ENCODE measurements at regions of chr19 and their contacts with region 1.

Region 1: GRCh38 chr19:47790398-47790814 is 11.9 kb downstream of the SELENOW start:
- DNase-seq: peak; percentile 90
- H3K4me3 Mint-ChIP-seq: no peak overlapping the region
- H3K27ac Mint-ChIP-seq: no peak overlapping the region
- H3K4me1 Mint-ChIP-seq: peaks cover 5% of the 10 kb centered on the region
- H3K27me3 Mint-ChIP-seq: no peaks in the 10 kb centered on the region

Region 2: GRCh38 chr19:47713046-47714021 is 77.1 kb before region 1 on chr19 and contains the start of gene EHD2:
- CTCF ChIA-PET with region 1: interaction called, 10 read pairs
- intact Hi-C with region 1: loop called (anchors 1 kb)
- DNase-seq: peak; percentile 47
- H3K4me3 Mint-ChIP-seq: peak within 1 kb of the TSS; percentile 31
- H3K27ac Mint-ChIP-seq: no peak within 1 kb of the TSS
- H3K4me1 Mint-ChIP-seq: peaks cover 7% of the 10 kb centered on the region
- H3K27me3 Mint-ChIP-seq: peaks cover 35% of the 10 kb centered on the region
- total RNA-seq, gene EHD2: 0.27 to 0.41 TPM

Region 3: GRCh38 chr19:47765523-47766358 is 24.7 kb before region 1 on chr19:
- CTCF ChIA-PET with region 1: interaction called, 11 read pairs
- intact Hi-C with region 1: loop called (anchors 1 kb)
- DNase-seq: peak; percentile 39
- H3K4me3 Mint-ChIP-seq: no peak overlapping the region
- H3K27ac Mint-ChIP-seq: no peak overlapping the region
- H3K4me1 Mint-ChIP-seq: peaks cover 12% of the 10 kb centered on the region
- H3K27me3 Mint-ChIP-seq: peaks cover 4% of the 10 kb centered on the region

Region 4: GRCh38 chr19:47863514-47863936 is 73.1 kb after region 1 on chr19:
- CTCF ChIA-PET with region 1: interaction called, 3 read pairs
- intact Hi-C with region 1: loop called (anchors 2 kb)
- DNase-seq: peak; percentile 93
- H3K4me3 Mint-ChIP-seq: no peak overlapping the region
- H3K27ac Mint-ChIP-seq: no peak overlapping the region
- H3K4me1 Mint-ChIP-seq: no peaks in the 10 kb centered on the region
- H3K27me3 Mint-ChIP-seq: peaks cover 17% of the 10 kb centered on the region